CD4-positive, alpha-beta memory T cell (primary cell): ENCODE measurements at regions of chr2 and their contacts with region 1.

Region 1: GRCh38 chr2:202265467-202266277 is at the start of gene NOP58:
- DNase-seq: peak; percentile 91 to 96 (median 94)
- H3K4me3 ChIP-seq: peak within 1 kb of the TSS; percentile 92 to 97
- H3K4me3 Mint-ChIP-seq: peak within 1 kb of the TSS in 6 of 8 donors; percentile 55 to 79 (median 67)
- H3K27ac ChIP-seq: peak within 1 kb of the TSS; percentile 99
- H3K27ac Mint-ChIP-seq: peak within 1 kb of the TSS in 5 of 7 donors; percentile 48 to 91 (median 72)
- H3K4me1 ChIP-seq: peaks cover 39% of the 10 kb centered on the region
- H3K4me1 Mint-ChIP-seq: peaks cover 9 to 35% (median 16%) of the 10 kb centered on the region in 4 donors
- H3K27me3 ChIP-seq: no peaks in the 10 kb centered on the region
- H3K27me3 Mint-ChIP-seq: no peaks in the 10 kb centered on the region
- total RNA-seq, gene NOP58: 114 to 123 TPM

Region 2: GRCh38 chr2:201795607-201796477 is 469.8 kb before region 1 on chr2:
- CTCF ChIA-PET with region 1: no interaction called
- POLR2A ChIA-PET with region 1: no interaction called
- intact Hi-C with region 1: no loop called
- DNase-seq: no peak
- H3K4me3 ChIP-seq: no peak overlapping the region
- H3K4me3 Mint-ChIP-seq: no peak overlapping the region
- H3K27ac ChIP-seq: no peak overlapping the region
- H3K27ac Mint-ChIP-seq: no peak overlapping the region
- H3K4me1 ChIP-seq: no peaks in the 10 kb centered on the region
- H3K4me1 Mint-ChIP-seq: no peaks in the 10 kb centered on the region
- H3K27me3 ChIP-seq: peaks cover 3% of the 10 kb centered on the region
- H3K27me3 Mint-ChIP-seq: peaks cover 5 to 12% of the 10 kb centered on the region in 2 donors

Region 3: GRCh38 chr2:202238234-202239197 is 27.2 kb before region 1 on chr2 and contains the start of gene SUMO1:
- CTCF ChIA-PET with region 1: interaction called, 3 read pairs
- POLR2A ChIA-PET with region 1: interaction called, 19 read pairs
- intact Hi-C with region 1: loop called (anchors 1 kb)
- DNase-seq: peak; percentile 90 to 96 (median 90)
- H3K4me3 ChIP-seq: peak within 1 kb of the TSS; percentile 52 to 96
- H3K4me3 Mint-ChIP-seq: peak within 1 kb of the TSS; percentile 95 to 100 (median 98)
- H3K27ac ChIP-seq: peak within 1 kb of the TSS; percentile 81
- H3K27ac Mint-ChIP-seq: peak within 1 kb of the TSS; percentile 89 to 100 (median 98)
- H3K4me1 ChIP-seq: peaks cover 17% of the 10 kb centered on the region
- H3K4me1 Mint-ChIP-seq: peaks cover 16 to 48% (median 34%) of the 10 kb centered on the region in 4 donors
- H3K27me3 ChIP-seq: no peaks in the 10 kb centered on the region
- H3K27me3 Mint-ChIP-seq: no peaks in the 10 kb centered on the region
- total RNA-seq, gene SUMO1: 53.2 to 53.5 TPM

Region 4: GRCh38 chr2:202375609-202376408 is 110.1 kb after region 1 on chr2 and contains the start of gene BMPR2:
- CTCF ChIA-PET with region 1: no interaction called
- POLR2A ChIA-PET with region 1: no interaction called
- intact Hi-C with region 1: loop called (anchors 1 kb)
- DNase-seq: peak; percentile 73 to 88 (median 81)
- H3K4me3 ChIP-seq: peak within 1 kb of the TSS; percentile 91 to 98
- H3K4me3 Mint-ChIP-seq: peak within 1 kb of the TSS; percentile 96 to 99 (median 99)
- H3K27ac ChIP-seq: peak within 1 kb of the TSS; percentile 76
- H3K27ac Mint-ChIP-seq: peak within 1 kb of the TSS; percentile 91 to 98 (median 95)
- H3K4me1 ChIP-seq: peaks cover 30% of the 10 kb centered on the region
- H3K4me1 Mint-ChIP-seq: peaks cover 21 to 43% (median 23%) of the 10 kb centered on the region in 4 donors
- H3K27me3 ChIP-seq: no peaks in the 10 kb centered on the region
- H3K27me3 Mint-ChIP-seq: no peaks in the 10 kb centered on the region
- total RNA-seq, gene BMPR2: 18.8 to 20.8 TPM